ENCODE measurements at regions of chr2 and their contacts with region 1.

Region 1: DNA sequence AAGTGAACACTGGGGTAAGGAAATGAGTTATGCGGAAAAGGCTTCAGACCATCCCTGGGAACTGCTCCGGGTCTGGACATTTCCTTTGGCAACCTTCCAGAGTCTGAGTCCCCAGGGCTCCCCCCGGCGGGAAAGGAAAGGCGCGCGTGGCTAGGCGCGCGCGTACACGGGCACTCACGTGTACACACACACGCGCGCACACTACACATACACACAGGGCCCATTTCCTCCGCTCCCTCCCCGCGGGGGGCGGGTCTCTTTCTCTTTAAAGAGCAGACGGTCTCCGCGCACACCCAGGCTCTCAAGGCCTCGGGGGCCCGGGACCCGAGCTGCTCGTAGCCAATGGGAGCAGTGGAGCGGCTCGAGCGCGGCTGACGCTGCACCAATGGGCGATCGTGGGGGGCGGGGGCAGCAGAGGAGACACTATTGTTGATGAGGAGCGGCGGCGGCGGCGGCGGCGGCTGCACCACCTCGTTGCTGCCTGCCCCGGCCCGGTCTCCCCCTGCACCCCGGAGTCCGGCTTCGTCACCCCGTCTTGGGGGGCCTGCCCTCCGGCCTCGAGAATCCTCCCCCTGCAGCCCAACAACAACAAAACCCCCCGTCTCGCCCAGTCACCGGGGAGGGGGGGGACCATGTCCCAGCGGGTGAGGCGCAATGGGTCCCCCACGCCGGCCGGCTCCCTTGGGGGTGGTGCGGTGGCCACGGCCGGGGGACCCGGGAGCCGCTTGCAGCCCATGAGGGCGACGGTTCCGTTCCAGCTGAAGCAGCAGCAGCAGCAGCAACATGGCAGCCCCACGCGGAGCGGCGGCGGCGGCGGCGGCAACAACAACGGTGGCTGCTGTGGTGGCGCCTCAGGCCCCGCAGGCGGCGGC is at the start of gene FAM117B:
- DNase-seq: peak; percentile 95 to 99 (median 97)
- H3K4me3 ChIP-seq: peak within 1 kb of the TSS; percentile 55 to 72
- H3K4me3 Mint-ChIP-seq: peak within 1 kb of the TSS; percentile 94 to 99 (median 98)
- H3K27ac ChIP-seq: peak within 1 kb of the TSS; percentile 67
- H3K27ac Mint-ChIP-seq: peak within 1 kb of the TSS; percentile 95 to 100 (median 99)
- H3K4me1 ChIP-seq: peaks cover 52% of the 10 kb centered on the region
- H3K4me1 Mint-ChIP-seq: peaks cover 36 to 48% (median 42%) of the 10 kb centered on the region in 4 donors
- H3K27me3 ChIP-seq: no peaks in the 10 kb centered on the region
- H3K27me3 Mint-ChIP-seq: no peaks in the 10 kb centered on the region
- total RNA-seq, gene FAM117B: 26.2 to 27.1 TPM

Region 2: DNA sequence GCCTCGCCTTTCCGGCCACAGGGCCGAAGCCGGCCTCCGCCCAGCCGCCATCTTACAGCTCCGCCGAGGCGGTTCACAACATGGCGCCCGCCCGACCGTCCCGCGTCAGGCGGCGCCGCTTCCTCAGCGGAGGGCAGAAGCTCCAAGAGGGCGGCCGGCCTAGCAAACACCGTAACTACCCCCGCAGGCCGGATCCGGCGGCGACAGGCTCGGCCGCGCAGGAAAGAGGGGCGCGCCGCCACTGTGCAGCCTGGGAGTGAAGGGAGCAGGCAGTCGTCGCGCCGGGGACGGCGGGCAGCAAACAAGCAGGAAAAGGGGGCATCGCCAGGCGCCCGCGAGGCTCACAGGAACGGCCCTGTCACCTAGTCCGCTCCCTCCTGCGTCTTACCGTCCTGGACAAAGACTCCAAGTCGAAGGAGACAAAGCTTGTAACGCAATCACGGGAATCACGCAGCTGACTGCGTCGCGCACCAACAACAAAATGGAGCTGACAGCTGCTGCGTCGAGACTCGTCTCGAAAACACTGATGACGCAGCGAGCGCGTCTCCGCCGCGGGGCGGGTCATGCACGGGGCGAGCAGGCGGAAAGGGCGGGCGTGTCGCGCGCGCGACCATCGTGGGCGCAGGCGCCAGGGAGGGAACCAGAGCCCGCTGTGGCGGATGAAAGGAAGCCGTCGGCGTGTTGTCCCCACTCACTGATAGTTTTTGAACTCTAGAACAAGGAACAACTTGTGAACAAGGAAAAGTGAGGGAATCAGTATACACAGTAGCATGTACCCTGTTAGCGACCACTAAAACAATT is 1770.4 kb before region 1 on chr2 and contains the start of gene CLK1:
- CTCF ChIA-PET with region 1: no interaction called
- POLR2A ChIA-PET with region 1: interaction called, 3 read pairs
- intact Hi-C with region 1: loop called (anchors 5 kb)
- DNase-seq: peak; percentile 93 to 97 (median 94)
- H3K4me3 ChIP-seq: peak within 1 kb of the TSS; percentile 83 to 100
- H3K4me3 Mint-ChIP-seq: peak within 1 kb of the TSS; percentile 91 to 99 (median 96)
- H3K27ac ChIP-seq: peak within 1 kb of the TSS; percentile 100
- H3K27ac Mint-ChIP-seq: peak within 1 kb of the TSS; percentile 89 to 100 (median 100)
- H3K4me1 ChIP-seq: peaks cover 47% of the 10 kb centered on the region
- H3K4me1 Mint-ChIP-seq: peaks cover 28 to 59% (median 41%) of the 10 kb centered on the region in 4 donors
- H3K27me3 ChIP-seq: no peaks in the 10 kb centered on the region
- H3K27me3 Mint-ChIP-seq: no peaks in the 10 kb centered on the region
- total RNA-seq, gene CLK1: 472 to 499 TPM

Region 3: DNA sequence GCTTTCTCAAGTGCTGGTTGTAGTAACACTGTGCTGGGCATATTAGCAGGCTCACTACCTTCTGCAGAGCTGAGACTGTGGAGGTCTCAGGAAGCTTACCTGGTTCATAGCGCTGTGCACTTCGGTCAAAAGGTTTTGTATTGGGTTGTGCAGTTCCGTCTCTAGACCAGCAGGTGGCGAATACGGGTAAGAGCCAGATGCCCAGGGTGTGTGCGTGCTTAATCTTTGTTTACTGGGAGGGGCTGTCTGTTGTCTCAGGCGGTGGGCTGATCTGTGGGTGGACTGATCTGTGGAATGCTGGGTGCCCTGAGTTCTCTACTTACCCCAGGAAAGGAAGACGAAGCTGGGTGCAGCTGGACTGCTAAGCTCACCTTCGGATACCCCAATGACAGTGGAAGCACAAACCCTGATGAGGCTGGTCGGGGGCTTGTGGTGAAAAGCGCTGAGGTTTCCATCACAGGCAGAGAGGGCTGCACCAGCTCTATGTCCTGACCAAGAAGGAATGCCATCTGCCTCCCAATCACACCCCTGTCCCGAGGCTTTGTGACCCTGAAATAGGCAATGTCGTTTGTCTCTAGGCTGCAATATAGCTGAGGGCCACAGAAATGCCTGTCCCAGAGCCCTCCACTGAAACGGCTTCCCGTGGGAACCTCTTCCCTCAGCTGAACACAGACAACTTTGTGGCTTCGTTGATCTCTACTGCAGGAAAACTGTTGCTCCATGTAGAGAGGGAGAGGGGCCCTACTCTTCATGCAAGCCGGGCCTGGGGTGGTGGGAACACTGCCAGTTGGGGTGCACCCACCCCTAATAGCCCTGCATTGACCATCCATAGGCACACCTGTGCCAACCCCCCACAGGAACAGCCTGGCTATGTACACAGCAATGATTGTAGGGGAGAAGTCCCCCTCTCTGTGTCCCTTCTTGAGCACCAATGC is 45.9 kb before region 1 on chr2:
- CTCF ChIA-PET with region 1: interaction called, 23 read pairs
- POLR2A ChIA-PET with region 1: interaction called, 16 read pairs
- intact Hi-C with region 1: loop called (anchors 1 kb)
- DNase-seq: peak; percentile 71 to 77 (median 72)
- H3K4me3 ChIP-seq: no peak overlapping the region
- H3K4me3 Mint-ChIP-seq: peak overlapping the region in 2 of 8 donors; percentile 43 to 50
- H3K27ac ChIP-seq: no peak overlapping the region
- H3K27ac Mint-ChIP-seq: peak overlapping the region in 1 of 7 donors; percentile 4
- H3K4me1 ChIP-seq: peaks cover 5% of the 10 kb centered on the region
- H3K4me1 Mint-ChIP-seq: peaks cover 4 to 8% (median 7%) of the 10 kb centered on the region in 4 donors
- H3K27me3 ChIP-seq: no peaks in the 10 kb centered on the region
- H3K27me3 Mint-ChIP-seq: peaks cover 0 to 2% of the 10 kb centered on the region in 2 donors

Region 4: DNA sequence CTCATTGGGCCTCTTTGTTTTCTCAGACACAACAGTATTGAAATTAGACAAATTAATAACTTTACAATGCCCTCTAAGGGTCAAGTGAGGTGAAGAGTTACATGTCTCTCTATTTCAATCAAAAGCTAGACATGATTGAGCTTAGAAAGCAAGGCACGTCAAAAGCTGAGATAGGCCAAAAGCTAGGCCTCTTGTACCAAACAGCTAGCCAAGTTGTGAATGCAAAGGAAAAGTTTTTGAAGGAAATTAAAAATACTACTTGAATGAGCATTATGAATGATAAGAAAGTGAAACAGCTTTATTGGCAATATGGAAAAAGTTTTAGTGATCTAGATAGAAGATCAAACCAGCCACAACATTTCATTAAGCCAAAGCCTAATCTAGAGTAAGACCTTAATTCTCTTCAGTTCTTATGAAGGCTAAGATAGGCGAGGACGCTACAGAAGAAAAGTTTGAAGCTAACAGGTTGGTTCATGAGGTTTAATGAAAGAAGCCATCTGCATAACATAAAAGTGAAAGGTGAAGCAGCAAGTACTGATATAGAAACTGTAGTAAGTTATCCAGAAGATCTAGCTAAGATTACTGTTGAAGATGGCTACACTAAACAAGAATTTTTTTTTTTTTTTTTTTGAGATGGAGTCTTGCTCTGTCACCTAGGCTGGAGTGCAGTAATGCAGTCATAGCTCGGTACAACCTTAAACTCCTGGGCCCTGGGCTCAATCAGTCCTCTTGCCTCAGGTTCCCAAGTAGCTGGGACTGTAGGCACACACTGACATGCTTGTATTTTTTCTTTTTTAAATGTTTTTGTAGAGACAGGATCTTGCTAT is 65.5 kb after region 1 on chr2:
- CTCF ChIA-PET with region 1: interaction called, 4 read pairs
- POLR2A ChIA-PET with region 1: interaction called, 13 read pairs
- intact Hi-C with region 1: loop called (anchors 2 kb)
- DNase-seq: peak in 3 of 5 donors; percentile 5 to 11 (median 6)
- H3K4me3 ChIP-seq: no peak overlapping the region
- H3K4me3 Mint-ChIP-seq: peak overlapping the region in 2 of 8 donors; percentile 13 to 22
- H3K27ac ChIP-seq: no peak overlapping the region
- H3K27ac Mint-ChIP-seq: peak overlapping the region in 6 of 7 donors; percentile 10 to 83 (median 50)
- H3K4me1 ChIP-seq: peaks cover 23% of the 10 kb centered on the region
- H3K4me1 Mint-ChIP-seq: peaks cover 20 to 46% (median 36%) of the 10 kb centered on the region in 4 donors
- H3K27me3 ChIP-seq: no peaks in the 10 kb centered on the region
- H3K27me3 Mint-ChIP-seq: no peaks in the 10 kb centered on the region

Region 5: DNA sequence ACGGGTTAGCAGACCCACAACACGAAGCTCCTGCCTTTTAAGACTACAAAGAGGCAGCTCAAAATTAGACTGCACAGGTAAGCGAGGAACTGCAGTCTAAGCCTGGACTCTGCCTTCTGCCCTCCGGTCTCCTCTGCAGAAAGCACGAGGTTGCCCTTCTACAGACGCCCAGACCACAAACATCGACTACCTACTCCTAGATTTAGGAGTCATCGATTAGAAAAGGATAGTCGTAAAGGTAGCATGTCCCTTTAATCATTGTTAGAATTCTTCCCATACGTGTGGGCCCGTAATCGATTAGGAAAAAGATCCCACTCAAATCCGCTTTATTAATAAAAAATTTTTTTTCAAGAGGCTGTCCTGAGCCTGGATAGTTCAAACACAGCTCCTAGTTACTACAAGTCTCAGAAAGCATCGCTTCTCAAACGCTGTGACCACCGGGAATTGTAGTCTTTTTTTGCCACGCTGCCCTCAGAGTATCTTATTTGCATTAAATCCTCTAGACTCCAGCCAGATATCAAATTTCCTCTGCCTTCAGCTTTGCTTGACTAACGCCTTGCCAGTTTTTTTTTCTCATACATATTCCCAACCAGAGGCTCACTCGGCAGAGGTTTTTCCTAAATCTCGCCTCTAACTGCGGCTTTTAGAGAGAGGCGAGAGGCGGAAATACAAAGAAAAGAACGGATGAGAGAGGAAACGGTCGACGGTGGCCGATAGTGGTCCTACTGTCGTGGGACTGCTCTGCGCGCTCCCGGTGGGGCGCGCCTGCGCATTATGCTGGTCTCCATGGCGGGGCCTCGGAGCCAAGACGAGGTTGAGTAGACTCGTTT is 276.9 kb after region 1 on chr2 and contains the starts of genes CARF and WDR12:
- CTCF ChIA-PET with region 1: no interaction called
- POLR2A ChIA-PET with region 1: interaction called, 19 read pairs
- intact Hi-C with region 1: loop called (anchors 1 kb)
- DNase-seq: peak; percentile 92
- H3K4me3 ChIP-seq: peak within 1 kb of the TSS; percentile 94 to 96
- H3K4me3 Mint-ChIP-seq: peak within 1 kb of the TSS; percentile 92 to 99 (median 98)
- H3K27ac ChIP-seq: peak within 1 kb of the TSS; percentile 74
- H3K27ac Mint-ChIP-seq: peak within 1 kb of the TSS; percentile 93 to 99 (median 98)
- H3K4me1 ChIP-seq: peaks cover 15% of the 10 kb centered on the region
- H3K4me1 Mint-ChIP-seq: peaks cover 16 to 48% (median 32%) of the 10 kb centered on the region in 4 donors
- H3K27me3 ChIP-seq: no peaks in the 10 kb centered on the region
- H3K27me3 Mint-ChIP-seq: no peaks in the 10 kb centered on the region
- total RNA-seq, gene CARF: 24.4 to 27.6 TPM
- total RNA-seq, gene WDR12: 21.3 to 25.0 TPM

Region 6: DNA sequence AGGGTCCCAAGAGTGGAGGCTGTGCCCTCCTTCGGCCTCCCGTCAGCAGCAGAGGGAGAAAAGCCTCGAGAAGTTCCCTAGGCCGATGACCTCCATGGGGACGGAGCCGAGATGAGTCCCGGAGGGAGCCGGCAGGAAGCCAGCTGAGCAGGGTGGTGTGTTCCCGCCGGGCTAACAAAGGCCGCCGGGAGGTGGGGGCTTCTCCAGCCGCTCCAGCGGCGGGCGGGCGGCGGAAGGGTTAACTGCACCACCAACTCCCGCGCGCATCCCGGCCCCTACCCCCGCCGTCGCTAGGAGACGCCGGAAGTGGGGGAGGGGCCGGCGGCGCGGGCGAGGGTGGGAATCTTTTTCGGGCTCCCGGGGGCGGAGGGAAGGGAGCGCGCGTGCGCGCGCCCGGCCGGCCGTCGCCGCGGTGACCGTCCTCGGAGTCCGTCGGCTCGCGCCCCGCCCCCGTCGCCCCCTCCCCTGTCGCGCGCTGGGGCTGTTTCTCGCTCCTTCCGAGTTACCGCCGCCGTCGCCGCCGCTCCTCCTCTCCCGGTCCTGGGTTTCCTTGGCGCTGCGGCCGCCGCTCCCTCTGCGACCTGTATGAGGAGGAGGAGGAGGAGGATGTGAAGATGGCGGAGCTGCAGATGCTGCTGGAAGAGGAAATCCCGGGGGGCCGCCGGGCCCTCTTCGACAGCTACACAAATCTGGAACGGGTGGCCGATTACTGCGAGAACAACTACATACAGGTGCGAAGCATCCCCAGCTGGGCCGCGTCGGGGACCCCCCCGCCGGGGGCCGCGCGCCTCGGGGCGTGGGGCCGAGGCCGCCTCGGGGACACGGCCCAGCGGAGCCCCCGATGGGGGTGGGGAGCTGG is 693.3 kb after region 1 on chr2 and contains the start of gene ABI2:
- CTCF ChIA-PET with region 1: no interaction called
- POLR2A ChIA-PET with region 1: interaction called, 3 read pairs
- intact Hi-C with region 1: loop called (anchors 2 kb)
- DNase-seq: peak; percentile 44 to 58 (median 48)
- H3K4me3 ChIP-seq: peak within 1 kb of the TSS; percentile 71 to 76
- H3K4me3 Mint-ChIP-seq: peak within 1 kb of the TSS; percentile 92 to 98 (median 94)
- H3K27ac ChIP-seq: peak within 1 kb of the TSS; percentile 63
- H3K27ac Mint-ChIP-seq: peak within 1 kb of the TSS; percentile 80 to 98 (median 92)
- H3K4me1 ChIP-seq: peaks cover 21% of the 10 kb centered on the region
- H3K4me1 Mint-ChIP-seq: peaks cover 19 to 29% (median 24%) of the 10 kb centered on the region in 4 donors
- H3K27me3 ChIP-seq: no peaks in the 10 kb centered on the region
- H3K27me3 Mint-ChIP-seq: no peaks in the 10 kb centered on the region
- total RNA-seq, gene ABI2: 30.6 to 39.1 TPM